ENCODE measurements at regions of chr22 and their contacts with region 1.

Region 1: GRCh38 chr22:27192135-27192829 is 534.9 kb downstream of the MIAT start:
- DNase-seq: no peak
- ATAC-seq: no peak
- H3K4me3 ChIP-seq: no peak overlapping the region
- H3K27ac ChIP-seq: no peak overlapping the region
- H3K4me1 ChIP-seq: no peaks in the 10 kb centered on the region
- H3K27me3 ChIP-seq: no peaks in the 10 kb centered on the region
- CTCF ChIP-seq: no peak

Region 2: GRCh38 chr22:25736378-25737011 is 1455.8 kb before region 1 on chr22:
- CTCF ChIA-PET with region 1: no interaction called
- POLR2A ChIA-PET with region 1: no interaction called
- in situ Hi-C with region 1: no loop called
- intact Hi-C with region 1: no loop called
- DNase-seq: no peak
- ATAC-seq: no peak
- H3K4me3 ChIP-seq: no peak overlapping the region
- H3K27ac ChIP-seq: no peak overlapping the region
- H3K4me1 ChIP-seq: no peaks in the 10 kb centered on the region
- H3K27me3 ChIP-seq: no peaks in the 10 kb centered on the region
- CTCF ChIP-seq: no peak

Region 3: DNA sequence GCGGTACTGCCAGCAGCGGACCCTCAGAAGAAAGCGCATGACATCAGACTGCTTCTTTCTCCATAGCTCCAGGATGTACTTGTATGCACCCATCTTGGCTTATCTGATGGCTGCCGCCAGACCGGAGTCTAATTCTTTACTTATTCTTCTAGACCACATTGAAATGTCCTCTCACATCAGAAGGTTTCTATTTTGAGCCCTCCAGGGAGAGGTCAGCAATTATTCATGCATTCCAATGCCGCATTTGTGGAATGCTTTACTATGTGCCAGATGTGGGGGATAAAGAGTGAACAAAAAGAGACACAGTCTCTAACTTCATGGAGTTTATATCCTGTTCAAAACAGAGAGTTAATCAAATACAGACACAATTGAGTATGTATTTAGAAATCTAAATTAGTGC is 304.8 kb before region 1 on chr22:
- CTCF ChIA-PET with region 1: no interaction called
- POLR2A ChIA-PET with region 1: interaction called, 16 read pairs
- in situ Hi-C with region 1: no loop called
- intact Hi-C with region 1: no loop called
- DNase-seq: no peak
- ATAC-seq: no peak
- H3K4me3 ChIP-seq: no peak overlapping the region
- H3K27ac ChIP-seq: no peak overlapping the region
- H3K4me1 ChIP-seq: peaks cover 2% of the 10 kb centered on the region; the same call in 1 of the 2 replicates
- H3K27me3 ChIP-seq: no peaks in the 10 kb centered on the region; the same call in 1 of the 2 replicates
- CTCF ChIP-seq: no peak

Region 4: DNA sequence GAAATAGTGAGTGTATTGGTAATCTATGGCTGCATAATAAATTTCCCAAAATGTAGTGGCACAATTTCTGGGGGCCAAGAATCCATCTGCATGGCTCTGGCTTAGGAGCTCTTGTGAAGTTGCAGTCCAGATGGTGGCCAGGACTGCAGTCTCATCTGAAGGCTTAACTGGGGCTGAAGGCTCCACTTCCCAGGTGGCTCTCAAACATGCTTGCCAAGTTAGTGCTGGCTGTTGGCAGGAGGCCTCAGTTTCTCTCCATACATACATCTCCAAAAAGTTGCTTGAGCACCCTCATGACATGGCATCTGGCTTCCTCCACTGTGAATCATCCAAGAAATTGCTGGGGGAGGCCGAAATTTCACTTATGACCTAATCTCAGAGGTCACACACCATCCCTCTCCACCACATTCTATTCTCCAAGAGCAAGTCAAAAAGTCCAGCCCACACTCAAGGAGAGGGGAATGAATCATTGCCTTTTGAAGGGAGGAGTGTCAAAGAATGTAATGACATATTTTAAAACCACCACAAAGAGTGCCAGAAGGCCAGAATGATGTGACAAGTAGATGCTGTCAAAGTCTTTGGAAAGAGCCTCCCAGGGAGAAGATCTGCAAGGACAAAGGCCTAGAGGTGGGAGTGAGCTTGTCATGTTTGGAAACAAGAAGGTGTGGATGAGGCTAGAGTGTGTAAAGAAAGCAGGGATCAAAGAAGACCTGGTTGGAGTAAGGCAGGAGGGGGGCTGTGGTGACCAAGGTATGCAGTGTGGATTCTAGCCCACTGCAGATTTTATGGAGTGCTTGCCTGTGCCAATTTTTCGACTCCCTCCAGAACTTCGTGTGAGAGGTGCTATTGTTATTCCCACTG is 31.3 kb after region 1 on chr22:
- CTCF ChIA-PET with region 1: no interaction called
- POLR2A ChIA-PET with region 1: no interaction called
- in situ Hi-C with region 1: no loop called
- intact Hi-C with region 1: no loop called
- DNase-seq: no peak
- ATAC-seq: no peak
- H3K4me3 ChIP-seq: no peak overlapping the region
- H3K27ac ChIP-seq: no peak overlapping the region
- H3K4me1 ChIP-seq: no peaks in the 10 kb centered on the region
- H3K27me3 ChIP-seq: no peaks in the 10 kb centered on the region
- CTCF ChIP-seq: no peak

Measured in Panc1 (cell line).